CD8-positive, alpha-beta T cell (primary cell): ENCODE measurements at regions of chr3 and their contacts with region 1.

Region 1: GRCh38 chr3:143389388-143389787 is 269.8 kb downstream of the CHST2 start:
- DNase-seq: no peak
- ATAC-seq: no peak
- H3K4me3 ChIP-seq: no peak overlapping the region
- H3K4me3 Mint-ChIP-seq: no peak overlapping the region
- H3K27ac ChIP-seq: no peak overlapping the region
- H3K27ac Mint-ChIP-seq: no peak overlapping the region
- H3K4me1 ChIP-seq: no peaks in the 10 kb centered on the region
- H3K4me1 Mint-ChIP-seq: no peaks in the 10 kb centered on the region
- H3K27me3 ChIP-seq: no peaks in the 10 kb centered on the region
- H3K27me3 Mint-ChIP-seq: no peaks in the 10 kb centered on the region
- CTCF ChIP-seq: no peak

Region 2: DNA sequence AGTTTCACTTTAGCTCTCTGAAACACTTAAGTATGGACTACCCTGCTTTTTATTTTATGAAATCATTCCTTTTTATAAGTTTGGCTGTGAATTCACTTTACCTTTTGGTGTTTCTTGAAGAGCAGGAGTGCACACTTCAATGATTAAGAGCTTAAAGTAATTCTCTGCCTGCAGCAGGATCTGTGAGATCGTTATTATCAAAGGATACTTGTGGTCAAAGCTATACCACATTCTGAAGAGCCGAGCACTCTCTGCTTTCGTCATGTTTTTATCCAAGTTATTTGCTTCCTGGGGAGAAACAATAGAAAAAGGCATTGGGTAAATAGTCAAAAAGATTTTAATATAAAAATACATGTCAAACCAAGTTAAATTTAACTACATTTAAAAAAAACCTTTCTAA is 26.1 kb before region 1 on chr3:
- CTCF ChIA-PET with region 1: no interaction called
- POLR2A ChIA-PET with region 1: no interaction called
- intact Hi-C with region 1: loop called in 1 of 2 experiments (anchors 1 kb)
- DNase-seq: peak in 2 of 9 experiments; percentile 2 to 36
- ATAC-seq: no peak
- H3K4me3 ChIP-seq: no peak overlapping the region
- H3K4me3 Mint-ChIP-seq: peak overlapping the region; percentile 27
- H3K27ac ChIP-seq: no peak overlapping the region
- H3K27ac Mint-ChIP-seq: peak overlapping the region; percentile 12
- H3K4me1 ChIP-seq: peaks cover 18% of the 10 kb centered on the region
- H3K4me1 Mint-ChIP-seq: peaks cover 22% of the 10 kb centered on the region
- H3K27me3 ChIP-seq: no peaks in the 10 kb centered on the region
- H3K27me3 Mint-ChIP-seq: no peaks in the 10 kb centered on the region
- CTCF ChIP-seq: no peak

Region 3: DNA sequence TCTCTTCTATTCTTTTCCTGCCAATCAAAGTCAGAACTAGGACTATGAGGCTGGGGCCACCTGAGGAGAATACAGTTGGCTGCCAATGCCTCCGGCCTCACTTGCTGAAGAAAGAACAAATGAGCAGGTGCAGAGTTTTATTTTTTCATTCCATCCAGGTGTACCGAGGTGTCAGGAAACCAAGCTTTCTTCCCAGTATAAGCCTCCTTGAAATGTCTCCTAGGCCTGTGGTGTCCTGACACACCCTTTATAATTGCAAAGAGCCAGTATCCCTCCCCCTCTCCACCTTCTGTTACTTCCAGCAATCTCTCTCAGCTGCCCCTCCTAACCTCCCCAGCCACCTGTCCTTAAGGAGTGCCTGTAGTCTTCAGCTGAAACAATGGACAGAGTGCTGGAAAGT is 331.0 kb after region 1 on chr3:
- CTCF ChIA-PET with region 1: no interaction called
- POLR2A ChIA-PET with region 1: no interaction called
- intact Hi-C with region 1: loop called in 1 of 2 experiments (anchors 5 kb)
- DNase-seq: no peak
- ATAC-seq: no peak
- H3K4me3 ChIP-seq: no peak overlapping the region
- H3K4me3 Mint-ChIP-seq: no peak overlapping the region
- H3K27ac ChIP-seq: no peak overlapping the region
- H3K27ac Mint-ChIP-seq: no peak overlapping the region
- H3K4me1 ChIP-seq: no peaks in the 10 kb centered on the region
- H3K4me1 Mint-ChIP-seq: no peaks in the 10 kb centered on the region
- H3K27me3 ChIP-seq: no peaks in the 10 kb centered on the region
- H3K27me3 Mint-ChIP-seq: no peaks in the 10 kb centered on the region
- CTCF ChIP-seq: no peak